Activated CD4-positive, alpha-beta T cell treated with anti-CD3 and anti-CD28 coated beads for 36 hours (primary cell): ENCODE measurements at regions of chr7 and their contacts with region 1.

Region 1: GRCh38 chr7:104923010-104923421 is 91.0 kb upstream of the KMT2E start:
- DNase-seq: peak; percentile 89
- ATAC-seq: peak; percentile 99
- H3K4me3 Mint-ChIP-seq: no peak overlapping the region
- H3K27ac Mint-ChIP-seq: peak overlapping the region; percentile 59
- H3K4me1 Mint-ChIP-seq: peaks cover 4% of the 10 kb centered on the region
- H3K27me3 Mint-ChIP-seq: no peaks in the 10 kb centered on the region

Region 2: DNA sequence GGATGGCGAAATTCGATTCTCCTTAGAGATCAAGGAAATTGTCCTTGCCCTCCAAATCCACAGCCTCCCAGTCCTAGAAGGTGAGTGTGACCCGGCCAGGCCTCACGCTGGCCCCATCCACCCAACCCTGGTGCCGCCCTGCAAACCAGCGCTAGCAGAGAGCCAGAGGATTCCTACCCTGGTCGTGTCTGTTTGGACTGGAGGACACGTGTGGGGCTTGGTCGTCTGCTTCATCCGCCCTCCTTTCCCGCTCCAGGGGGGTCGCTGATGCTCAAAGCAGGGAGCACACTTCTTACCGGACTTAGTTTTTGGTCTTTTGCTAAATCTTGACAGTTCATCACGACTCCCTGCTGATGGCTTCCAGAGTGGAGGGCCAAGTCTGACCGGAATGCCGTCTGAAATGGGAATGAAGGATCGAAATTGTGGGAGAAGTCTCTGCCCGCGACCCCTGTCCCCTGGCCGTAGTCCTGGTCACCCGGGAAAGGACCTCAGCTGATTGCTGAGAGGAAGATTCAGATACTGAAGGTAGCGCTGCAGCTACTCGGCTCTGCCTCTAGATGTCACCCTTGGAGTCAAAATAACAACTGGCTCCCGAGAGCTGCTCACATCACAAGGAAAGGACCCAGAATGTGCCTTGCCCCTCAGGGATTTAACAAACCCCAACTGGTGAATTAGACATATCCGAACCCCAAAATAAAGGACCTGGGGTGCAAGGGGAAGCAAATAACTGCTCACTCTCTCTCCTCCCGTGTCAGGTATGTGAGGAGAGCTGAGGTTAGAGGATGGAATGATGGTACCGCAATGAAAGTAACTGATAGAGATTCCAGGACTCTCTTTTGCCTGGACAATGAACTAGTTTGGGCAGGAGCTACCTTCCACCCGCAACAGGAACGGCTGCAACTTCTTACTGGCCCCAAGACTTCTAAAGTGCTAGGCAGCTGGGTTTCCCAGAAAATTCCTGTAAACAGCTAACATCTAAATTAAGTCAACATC is 691.7 kb before region 1 on chr7:
- CTCF ChIA-PET with region 1: interaction called, 18 read pairs
- POLR2A ChIA-PET with region 1: no interaction called
- intact Hi-C with region 1: loop called (anchors 1 to 5 kb)
- DNase-seq: peak; percentile 58
- ATAC-seq: peak; percentile 75
- H3K4me3 Mint-ChIP-seq: no peak overlapping the region
- H3K27ac Mint-ChIP-seq: no peak overlapping the region
- H3K4me1 Mint-ChIP-seq: peaks cover 4% of the 10 kb centered on the region
- H3K27me3 Mint-ChIP-seq: peaks cover 21% of the 10 kb centered on the region

Region 3: DNA sequence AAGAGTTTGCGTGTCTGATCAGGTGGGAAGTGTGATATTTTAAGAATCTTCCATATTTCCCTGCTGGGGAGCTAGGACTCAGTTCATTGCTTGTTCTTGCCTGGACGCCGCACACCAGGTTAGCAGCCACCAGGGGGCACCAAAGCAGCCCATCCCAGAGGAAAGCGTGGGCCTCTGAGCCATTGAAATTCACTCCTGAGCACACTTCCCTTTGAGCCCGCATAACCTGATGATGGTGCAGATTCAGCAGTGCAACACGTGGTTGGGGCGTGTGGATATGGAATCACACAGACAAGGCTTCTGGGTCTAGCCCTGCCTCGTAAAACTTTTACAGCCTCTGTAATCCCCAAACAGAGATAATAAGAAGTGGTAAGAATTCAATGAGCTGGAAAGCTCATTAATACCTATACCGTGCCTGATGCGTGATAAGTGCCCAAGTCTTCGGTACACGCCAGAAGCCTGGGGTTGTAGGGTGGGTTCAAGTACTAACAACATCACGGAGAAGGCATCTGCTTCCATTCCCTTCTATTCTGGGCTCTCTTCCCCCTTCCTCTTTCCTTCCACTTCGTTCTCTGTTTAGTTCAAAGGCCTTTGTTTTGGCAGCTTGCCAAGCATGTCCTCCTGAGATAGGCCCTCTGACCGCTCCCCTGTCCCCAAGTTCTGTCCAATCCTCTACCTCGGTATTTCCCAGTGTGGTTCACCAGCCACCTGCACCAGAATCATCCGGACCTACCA is 39.1 kb before region 1 on chr7:
- CTCF ChIA-PET with region 1: interaction called, 111 read pairs
- POLR2A ChIA-PET with region 1: no interaction called
- intact Hi-C with region 1: loop called (anchors 1 kb)
- DNase-seq: peak; percentile 87
- ATAC-seq: peak; percentile 89
- H3K4me3 Mint-ChIP-seq: no peak overlapping the region
- H3K27ac Mint-ChIP-seq: no peak overlapping the region
- H3K4me1 Mint-ChIP-seq: peaks cover 10% of the 10 kb centered on the region
- H3K27me3 Mint-ChIP-seq: no peaks in the 10 kb centered on the region

Region 4: DNA sequence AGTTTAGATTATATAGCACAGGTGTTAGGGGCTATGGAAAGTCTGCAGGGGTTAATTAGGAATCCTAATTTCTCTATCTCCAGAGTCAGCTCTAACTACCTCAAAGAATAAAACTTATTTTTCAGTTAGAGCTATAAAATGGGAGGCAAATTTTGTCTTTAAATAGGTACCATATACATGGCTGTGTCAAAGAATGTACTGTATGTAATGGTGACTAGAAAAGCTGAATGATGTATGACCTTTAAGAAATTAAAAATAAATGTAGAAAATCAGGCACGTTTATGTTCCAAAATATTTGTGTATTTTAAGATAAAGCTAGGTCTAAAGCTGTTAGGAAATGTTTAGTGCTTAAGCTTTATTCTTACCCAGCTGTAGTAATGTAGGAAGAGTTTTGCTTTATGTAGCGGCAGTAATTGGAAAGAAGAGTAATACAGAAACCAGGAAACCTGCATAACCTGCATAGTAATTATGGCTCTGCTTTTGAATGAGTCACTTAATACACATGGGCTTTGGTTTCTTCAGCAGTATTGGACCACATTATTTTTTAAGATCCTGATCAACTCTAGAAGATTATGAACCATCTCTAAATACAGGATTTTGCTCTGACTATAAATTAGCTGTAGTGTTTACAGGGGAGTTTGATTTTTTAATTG is 176.0 kb after region 1 on chr7:
- CTCF ChIA-PET with region 1: no interaction called
- POLR2A ChIA-PET with region 1: no interaction called
- intact Hi-C with region 1: loop called in 1 of 2 experiments (anchors 5 kb)
- DNase-seq: no peak
- ATAC-seq: peak; percentile 89
- H3K4me3 Mint-ChIP-seq: no peak overlapping the region
- H3K27ac Mint-ChIP-seq: peak overlapping the region; percentile 89
- H3K4me1 Mint-ChIP-seq: peaks cover 63% of the 10 kb centered on the region
- H3K27me3 Mint-ChIP-seq: no peaks in the 10 kb centered on the region

Region 5: GRCh38 chr7:105336009-105336408 is 413.0 kb after region 1 on chr7:
- CTCF ChIA-PET with region 1: no interaction called
- POLR2A ChIA-PET with region 1: no interaction called
- intact Hi-C with region 1: loop called in 1 of 2 experiments (anchors 2 kb)
- DNase-seq: no peak
- ATAC-seq: no peak
- H3K4me3 Mint-ChIP-seq: no peak overlapping the region
- H3K27ac Mint-ChIP-seq: no peak overlapping the region
- H3K4me1 Mint-ChIP-seq: peaks cover 21% of the 10 kb centered on the region
- H3K27me3 Mint-ChIP-seq: no peaks in the 10 kb centered on the region